ENCODE measurements at regions of chr22 and their contacts with region 1.

Region 1: DNA sequence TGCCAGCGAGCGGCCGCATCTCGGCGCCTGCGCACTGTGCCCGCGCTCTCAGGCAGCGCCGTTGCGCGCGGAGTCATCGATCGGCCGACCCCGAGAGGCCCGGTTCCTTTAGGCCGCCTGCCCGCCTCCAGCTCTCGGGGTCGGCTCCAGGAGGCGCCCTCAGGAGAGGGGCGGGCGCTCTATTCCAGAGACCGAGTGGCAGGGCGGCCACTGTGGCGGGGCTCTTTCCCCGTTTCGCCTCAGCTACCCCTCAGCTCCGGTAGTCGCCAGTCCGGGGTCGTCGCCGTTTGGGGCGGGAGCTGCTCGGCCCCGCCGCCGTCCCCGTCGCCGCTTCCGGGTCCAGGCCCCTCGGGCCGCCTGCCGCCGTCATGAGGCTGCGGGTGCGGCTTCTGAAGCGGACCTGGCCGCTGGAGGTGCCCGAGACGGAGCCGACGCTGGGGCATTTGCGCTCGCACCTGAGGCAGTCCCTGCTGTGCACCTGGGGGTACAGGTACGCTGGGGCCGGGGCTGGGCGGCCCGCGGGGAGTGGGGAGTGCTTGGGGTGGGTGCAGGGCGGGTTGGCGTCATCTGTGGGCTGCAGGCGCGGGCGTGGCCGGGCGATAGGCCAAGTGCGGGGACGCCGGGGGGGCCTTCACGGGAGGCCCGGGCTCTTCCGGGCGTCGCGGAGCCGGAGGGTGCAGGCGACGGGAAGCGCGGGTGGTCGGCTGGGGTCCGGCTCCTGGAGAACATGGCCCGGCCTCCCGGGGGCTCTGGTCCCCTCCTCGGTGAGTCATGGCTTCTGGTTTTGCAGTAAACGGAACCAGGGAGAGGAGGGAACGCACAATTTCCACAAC is at the start of gene FBXO7:
- DNase-seq: peak; percentile 96
- H3K4me3 ChIP-seq: peak within 1 kb of the TSS; percentile 96
- H3K27ac ChIP-seq: peak within 1 kb of the TSS; percentile 94
- H3K4me1 ChIP-seq: peaks cover 18% of the 10 kb centered on the region
- H3K27me3 ChIP-seq: no peaks in the 10 kb centered on the region
- CTCF ChIP-seq: peak; percentile 53
- total RNA-seq, gene FBXO7: 89.0 and 95.2 TPM in 2 replicates

Region 2: DNA sequence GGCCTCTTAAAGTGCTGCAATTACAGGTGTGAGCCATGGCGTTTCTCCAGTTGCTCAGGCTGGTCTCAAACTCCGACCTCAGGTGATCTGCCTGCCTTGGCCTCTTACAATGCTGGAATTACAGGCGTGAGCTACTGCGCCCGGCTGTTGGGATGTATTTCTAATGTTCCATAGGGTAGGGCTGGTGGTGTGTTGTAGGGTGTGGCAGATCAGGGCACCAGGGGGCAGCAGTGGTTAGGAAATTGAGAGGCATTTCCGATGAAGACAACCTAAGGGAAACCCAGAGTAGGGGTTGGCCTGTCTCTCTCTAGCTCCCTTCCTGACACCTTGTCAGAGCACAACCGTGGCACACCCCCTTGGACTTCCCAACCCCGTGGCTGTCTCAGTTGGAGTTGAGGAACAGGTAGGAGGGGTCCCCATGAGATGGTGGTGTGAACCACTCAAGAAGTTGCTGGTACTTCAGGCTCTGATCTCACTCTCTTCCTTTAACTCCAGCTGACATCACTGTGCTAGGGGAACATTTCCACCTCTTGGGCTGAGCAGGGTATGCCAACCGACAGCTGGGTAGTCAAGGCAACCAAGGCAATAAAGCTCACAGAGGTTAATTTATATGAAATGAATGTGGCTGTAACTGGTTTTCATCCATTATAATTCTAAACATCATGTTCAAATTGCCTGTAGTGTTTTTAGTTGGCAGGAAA is 497.6 kb before region 1 on chr22:
- CTCF ChIA-PET with region 1: no interaction called
- POLR2A ChIA-PET with region 1: no interaction called
- intact Hi-C with region 1: loop called (anchors 5 kb)
- DNase-seq: peak; percentile 83
- H3K4me3 ChIP-seq: no peak overlapping the region
- H3K27ac ChIP-seq: no peak overlapping the region
- H3K4me1 ChIP-seq: no peaks in the 10 kb centered on the region
- H3K27me3 ChIP-seq: no peaks in the 10 kb centered on the region
- CTCF ChIP-seq: peak; percentile 88

Region 3: DNA sequence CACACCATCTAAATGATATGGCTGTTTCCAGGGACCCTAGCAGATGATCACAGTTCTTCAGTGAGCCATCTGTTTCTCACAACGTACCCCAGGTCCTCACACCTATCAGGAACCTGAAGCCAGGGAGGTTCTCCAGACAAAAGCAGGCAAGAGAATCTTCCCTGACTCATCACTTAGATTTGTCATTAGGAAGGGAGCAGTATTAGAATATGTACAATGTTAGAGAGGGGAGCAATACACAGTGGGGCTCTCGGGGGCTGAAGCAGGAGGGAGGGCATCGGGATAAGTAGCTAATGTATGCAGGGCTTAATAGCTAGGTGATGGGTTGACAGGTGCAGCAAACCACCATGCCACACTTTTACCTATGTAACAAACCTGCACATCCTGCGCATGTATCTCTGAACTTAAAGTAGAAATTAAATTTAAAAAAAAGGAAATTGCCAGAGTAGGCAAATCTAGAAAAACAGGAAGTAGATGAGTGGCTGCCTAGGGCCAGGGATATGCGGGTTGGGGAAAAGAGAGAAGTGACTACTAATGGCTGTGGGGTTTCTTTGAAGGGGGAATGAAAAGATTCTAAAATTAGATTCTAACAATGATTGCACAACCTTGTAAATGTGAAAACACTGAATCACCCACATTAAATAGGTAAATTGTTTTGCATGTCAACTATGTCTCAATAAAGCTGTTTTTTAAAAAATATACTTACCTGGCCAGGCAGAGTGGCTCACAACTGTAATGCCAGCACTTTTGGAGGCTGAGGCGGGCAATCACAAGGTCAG is 330.2 kb before region 1 on chr22:
- CTCF ChIA-PET with region 1: no interaction called
- POLR2A ChIA-PET with region 1: no interaction called
- intact Hi-C with region 1: loop called (anchors 5 kb)
- DNase-seq: no peak
- H3K4me3 ChIP-seq: no peak overlapping the region
- H3K27ac ChIP-seq: no peak overlapping the region
- H3K4me1 ChIP-seq: no peaks in the 10 kb centered on the region
- H3K27me3 ChIP-seq: peaks cover 4% of the 10 kb centered on the region
- CTCF ChIP-seq: no peak

Region 4: DNA sequence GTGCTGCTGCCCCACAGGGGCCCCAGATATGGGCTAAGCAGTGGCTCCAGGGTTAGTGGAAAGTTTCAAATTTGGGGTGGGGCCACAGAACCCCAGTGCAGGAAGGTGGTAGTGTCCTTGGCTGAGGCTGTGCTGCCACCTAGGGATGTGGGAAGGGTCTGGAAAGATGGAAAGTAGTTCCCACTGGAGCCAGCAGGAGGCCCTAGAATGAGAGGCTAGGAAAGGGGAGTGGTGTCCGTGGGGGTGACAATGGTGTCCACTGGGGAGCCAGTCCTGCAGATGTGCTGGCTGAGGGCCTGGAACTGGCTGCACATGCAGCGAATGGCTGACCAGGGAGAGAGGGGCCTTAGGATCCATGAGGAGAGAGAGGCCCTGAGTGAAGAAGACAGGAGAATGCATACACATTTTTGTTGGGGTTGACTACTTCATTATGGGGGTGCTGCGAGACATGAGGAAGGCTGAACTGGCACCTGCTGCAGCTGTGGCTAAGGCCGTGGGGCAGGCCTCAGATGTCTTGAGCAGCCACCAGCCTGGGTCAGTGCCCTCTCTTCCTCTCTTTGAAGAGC is 96.1 kb before region 1 on chr22:
- CTCF ChIA-PET with region 1: no interaction called
- POLR2A ChIA-PET with region 1: no interaction called
- intact Hi-C with region 1: loop called (anchors 2 kb)
- DNase-seq: peak; percentile 75
- H3K4me3 ChIP-seq: no peak overlapping the region
- H3K27ac ChIP-seq: no peak overlapping the region
- H3K4me1 ChIP-seq: no peaks in the 10 kb centered on the region
- H3K27me3 ChIP-seq: no peaks in the 10 kb centered on the region
- CTCF ChIP-seq: peak; percentile 93

Measured in A673 (cell line).